Left colon (tissue), 2 donors: ENCODE measurements at regions of chr3 and their contacts with region 1.

Region 1: DNA sequence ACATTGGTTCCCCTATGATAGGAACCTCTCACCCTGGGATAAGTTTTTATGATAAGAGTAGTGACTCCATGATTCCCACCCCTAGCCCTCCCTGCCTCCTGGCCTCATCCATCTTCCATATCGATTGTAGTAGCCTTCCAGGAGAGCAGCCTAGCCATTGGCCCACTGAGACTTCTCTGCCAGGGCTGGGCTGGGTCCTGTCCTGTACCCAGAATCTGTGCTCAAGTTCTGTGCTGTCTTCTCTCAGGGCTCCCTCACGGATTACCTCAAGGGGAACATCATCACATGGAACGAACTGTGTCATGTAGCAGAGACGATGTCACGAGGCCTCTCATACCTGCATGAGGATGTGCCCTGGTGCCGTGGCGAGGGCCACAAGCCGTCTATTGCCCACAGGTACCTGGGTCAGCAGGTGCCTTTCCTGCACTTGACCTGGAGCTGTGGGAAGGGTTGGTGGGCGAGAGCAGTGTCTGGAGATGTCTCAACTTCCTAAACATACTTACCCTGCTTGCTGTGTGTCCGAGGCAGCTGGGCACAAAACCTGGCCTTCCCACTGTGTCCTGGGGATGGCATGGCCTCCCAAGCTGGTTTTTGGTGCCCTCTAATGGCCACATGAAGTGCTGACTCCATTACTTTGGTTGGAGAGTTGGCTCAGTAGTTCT is 16.6 kb upstream of the EXOG start:
- DNase-seq: peak; percentile 49 to 72
- ATAC-seq: peak; percentile 92

Region 2: GRCh38 chr3:38346587-38347410 is 132.8 kb before region 1 on chr3 and contains the start of gene XYLB:
- intact Hi-C with region 1: loop called (anchors 2 to 10 kb)
- DNase-seq: peak; percentile 84 to 92
- ATAC-seq: peak; percentile 95
- total RNA-seq, gene XYLB: 18.0 to 19.2 TPM